Heart right ventricle (tissue), 16 donors: ENCODE measurements at regions of chr21 and their contacts with region 1.

Region 1: DNA sequence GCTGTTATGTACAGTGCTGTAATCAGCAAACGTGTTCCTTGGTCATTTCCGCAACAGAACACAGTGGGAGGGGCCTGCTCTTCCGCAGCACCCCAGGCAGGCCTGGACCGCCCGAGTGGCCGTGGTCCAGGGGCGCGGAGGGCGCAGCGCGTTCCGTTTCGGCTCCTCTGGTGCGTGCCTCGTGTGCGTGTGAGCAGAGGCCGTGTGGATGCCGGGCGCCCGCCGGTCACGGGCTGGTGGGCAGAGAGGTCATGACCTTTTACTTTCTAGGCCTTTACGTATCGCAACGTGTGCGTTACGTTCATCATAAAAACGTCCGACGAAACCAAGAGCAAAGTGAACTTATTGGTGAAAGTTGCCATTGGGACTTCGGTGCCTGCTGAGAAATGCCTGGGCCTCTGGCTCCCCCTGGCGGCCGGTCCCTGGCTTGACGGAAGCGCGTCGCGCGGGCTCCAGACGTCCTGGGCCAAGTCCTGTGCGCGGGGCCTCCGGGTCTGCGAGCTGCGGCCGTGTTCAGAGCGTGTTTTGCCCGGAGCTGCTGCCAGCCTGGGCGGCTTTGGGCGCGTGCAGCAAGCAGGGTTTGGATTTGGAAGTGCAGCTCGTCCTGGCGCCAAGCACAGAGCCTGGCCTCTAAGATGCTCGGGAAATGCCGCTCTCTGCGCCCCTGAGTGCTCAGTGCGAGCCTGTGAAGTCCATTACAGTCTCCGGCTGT is 34.4 kb downstream of the COL18A1 start:
- DNase-seq: peak; percentile 86 to 89
- ATAC-seq: peak; percentile 83 to 90 (median 88)
- H3K4me3 ChIP-seq: peak overlapping the region in 9 of 10 donors; percentile 25 to 55 (median 40)
- H3K27ac ChIP-seq: peak overlapping the region; percentile 54 to 94 (median 81)
- H3K4me1 ChIP-seq: peaks cover 0 to 36% (median 18%) of the 10 kb centered on the region in 9 donors
- H3K27me3 ChIP-seq: no peaks in the 10 kb centered on the region
- CTCF ChIP-seq: peak; percentile 92 to 99 (median 98)

Region 2: GRCh38 chr21:45147473-45148315 is 291.6 kb before region 1 on chr21:
- intact Hi-C with region 1: loop called in 5 of 10 experiments (anchors 5 to 10 kb)
- DNase-seq: no peak
- ATAC-seq: no peak
- H3K4me3 ChIP-seq: no peak overlapping the region
- H3K27ac ChIP-seq: no peak overlapping the region
- H3K4me1 ChIP-seq: peaks cover 0 to 19% (median 2%) of the 10 kb centered on the region in 9 donors
- H3K27me3 ChIP-seq: no peaks in the 10 kb centered on the region
- CTCF ChIP-seq: no peak

Region 3: DNA sequence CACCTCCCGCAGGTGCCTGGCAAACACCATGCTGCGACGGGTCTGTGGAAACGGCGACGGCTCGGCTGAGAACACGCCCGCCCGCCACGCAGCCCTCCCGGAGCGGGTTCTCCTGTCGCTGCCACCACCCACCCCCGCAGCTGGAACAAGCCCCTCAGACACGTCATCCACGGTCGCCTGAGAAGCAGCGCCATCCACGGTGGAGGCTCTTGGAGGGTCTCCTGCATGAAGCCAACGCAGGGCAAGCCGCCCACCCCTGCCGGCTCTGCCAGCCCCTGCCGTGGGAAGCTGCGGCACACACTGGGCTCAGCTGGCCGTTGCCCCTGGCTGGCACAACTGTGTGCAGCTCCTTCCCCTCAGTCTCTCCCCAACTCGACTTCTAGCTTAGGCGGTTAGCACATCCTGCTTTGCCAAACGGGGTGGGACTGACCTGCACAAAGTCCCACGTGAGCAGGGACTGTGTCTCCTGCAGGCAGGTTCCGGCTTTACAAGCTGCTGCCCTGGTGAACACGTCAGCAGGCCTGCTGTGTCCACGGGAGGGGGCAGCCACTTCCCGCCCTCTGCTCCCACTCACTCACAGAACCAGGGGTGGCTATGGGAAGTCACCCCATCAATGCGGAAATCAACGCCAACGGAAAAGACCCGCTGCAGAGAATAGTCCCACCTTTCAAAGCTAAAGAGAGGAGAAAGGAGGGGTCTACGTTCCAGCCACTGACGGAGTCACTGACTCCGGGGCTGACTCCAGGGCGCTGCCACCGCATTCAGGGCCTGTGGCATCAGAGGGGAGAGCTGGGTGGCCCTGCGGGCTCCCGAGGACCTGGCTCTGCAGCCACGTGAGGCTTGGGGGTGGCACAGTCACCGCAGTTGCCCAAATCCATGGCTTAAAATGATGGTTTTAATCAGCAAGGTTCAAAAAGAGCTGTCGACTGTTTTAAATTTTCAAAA is 161.9 kb before region 1 on chr21:
- intact Hi-C with region 1: no loop called
- DNase-seq: no peak
- ATAC-seq: peak in 2 of 8 donors; percentile 15 to 43
- H3K4me3 ChIP-seq: no peak overlapping the region
- H3K27ac ChIP-seq: no peak overlapping the region
- H3K4me1 ChIP-seq: no peaks in the 10 kb centered on the region
- H3K27me3 ChIP-seq: no peaks in the 10 kb centered on the region
- CTCF ChIP-seq: no peak

Region 4: GRCh38 chr21:45287438-45288391 is 151.6 kb before region 1 on chr21 and contains the start of gene POFUT2:
- intact Hi-C with region 1: loop called in 9 of 10 experiments (anchors 1 to 5 kb)
- DNase-seq: peak; percentile 97 to 99
- ATAC-seq: peak; percentile 89 to 93 (median 92)
- H3K4me3 ChIP-seq: peak within 1 kb of the TSS; percentile 41 to 77 (median 68)
- H3K27ac ChIP-seq: peak within 1 kb of the TSS in 9 of 10 donors; percentile 35 to 90 (median 81)
- H3K4me1 ChIP-seq: peaks cover 16 to 40% (median 28%) of the 10 kb centered on the region in 9 donors
- H3K27me3 ChIP-seq: no peaks in the 10 kb centered on the region
- CTCF ChIP-seq: peak in 1 of 9 donors; percentile 3
- total RNA-seq, gene POFUT2: 12.7 to 20.4 (median 16.3) TPM

Region 5: DNA sequence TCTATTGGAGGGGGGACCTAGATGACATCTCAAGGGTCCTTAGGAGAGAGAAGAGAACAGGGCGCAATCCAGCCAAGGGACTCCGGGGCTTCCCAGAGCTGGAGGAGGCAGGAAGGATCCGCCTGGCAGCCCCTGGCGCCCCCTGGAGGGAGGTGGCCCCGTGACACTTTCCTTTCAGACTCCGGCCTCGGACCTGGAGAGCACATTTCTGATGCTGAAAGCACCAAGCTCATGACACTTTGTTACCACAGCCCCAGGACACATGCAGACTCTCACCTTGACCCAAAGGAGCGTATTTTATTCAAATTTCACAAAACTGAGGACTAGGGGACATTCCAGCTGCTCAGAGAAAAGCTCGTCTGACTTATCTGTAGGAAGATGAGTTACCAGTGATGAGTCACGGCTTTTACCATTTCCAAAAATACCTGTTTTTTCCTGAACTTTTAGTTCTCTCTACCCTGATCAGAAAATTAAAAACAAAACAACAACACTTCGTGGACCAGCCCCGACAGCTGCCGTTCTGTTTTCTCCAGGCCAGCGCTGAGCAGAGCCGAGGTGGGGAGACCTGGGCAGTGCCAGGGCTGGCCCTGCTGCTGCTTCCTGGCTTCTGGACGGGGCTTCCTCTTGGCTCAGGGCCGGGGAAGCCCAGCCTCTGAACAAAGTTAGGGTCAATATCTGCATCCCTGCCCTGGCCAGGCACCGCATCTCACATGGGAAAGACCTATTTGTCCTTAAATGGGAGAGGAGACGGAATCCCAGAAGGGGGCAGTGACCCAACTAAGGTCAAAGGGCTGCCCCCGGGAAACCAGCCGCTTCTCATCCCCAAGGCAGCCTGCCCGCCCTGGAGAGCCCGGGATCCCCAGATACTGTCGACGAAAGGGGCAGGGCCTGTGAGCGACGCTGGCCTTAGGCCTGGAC is 130.0 kb before region 1 on chr21:
- intact Hi-C with region 1: loop called in 1 of 10 experiments (anchors 5 kb)
- DNase-seq: peak; percentile 77 to 81
- ATAC-seq: peak; percentile 25 to 69 (median 50)
- H3K4me3 ChIP-seq: no peak overlapping the region
- H3K27ac ChIP-seq: peak overlapping the region; percentile 31 to 89 (median 64)
- H3K4me1 ChIP-seq: peaks cover 14 to 45% (median 35%) of the 10 kb centered on the region in 9 donors
- H3K27me3 ChIP-seq: no peaks in the 10 kb centered on the region
- CTCF ChIP-seq: peak; percentile 54 to 83 (median 74)

Region 6: GRCh38 chr21:45386721-45387371 is 52.5 kb before region 1 on chr21:
- intact Hi-C with region 1: loop called in 7 of 10 experiments (anchors 1 to 5 kb)
- DNase-seq: peak; percentile 51 to 54
- ATAC-seq: peak; percentile 41 to 68 (median 64)
- H3K4me3 ChIP-seq: peak overlapping the region in 1 of 10 donors; percentile 8
- H3K27ac ChIP-seq: peak overlapping the region in 7 of 10 donors; percentile 1 to 66 (median 44)
- H3K4me1 ChIP-seq: peaks cover 9 to 25% (median 17%) of the 10 kb centered on the region in 9 donors
- H3K27me3 ChIP-seq: peaks cover 0 to 9% (median 0%) of the 10 kb centered on the region in 7 donors
- CTCF ChIP-seq: peak in 7 of 9 donors; percentile 30 to 59 (median 49)

Region 7: DNA sequence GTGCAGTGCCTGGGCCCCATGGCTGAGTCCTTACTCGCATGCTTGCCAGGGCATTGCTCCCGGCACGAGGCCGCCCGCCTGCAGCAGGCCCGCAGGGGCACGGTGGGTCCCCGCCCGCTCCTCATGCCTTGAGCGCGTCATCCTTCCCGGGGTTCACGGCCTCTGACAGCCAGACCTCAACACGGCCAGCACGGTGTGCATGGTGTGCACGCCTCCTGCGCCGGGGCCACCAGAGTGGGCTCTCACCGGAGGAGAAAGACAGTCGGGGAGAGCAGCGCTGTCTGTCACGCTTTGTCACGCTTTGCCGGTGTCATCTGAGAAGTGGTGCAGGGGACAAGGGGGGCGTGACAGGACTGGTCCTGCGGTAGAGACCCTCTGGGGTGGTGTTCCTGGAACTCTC is 46.3 kb before region 1 on chr21:
- intact Hi-C with region 1: loop called in 3 of 10 experiments (anchors 5 kb)
- DNase-seq: no peak
- ATAC-seq: no peak
- H3K4me3 ChIP-seq: no peak overlapping the region
- H3K27ac ChIP-seq: no peak overlapping the region
- H3K4me1 ChIP-seq: peaks cover 0 to 7% (median 0%) of the 10 kb centered on the region in 9 donors
- H3K27me3 ChIP-seq: peaks cover 0 to 9% (median 0%) of the 10 kb centered on the region in 7 donors
- CTCF ChIP-seq: no peak

Region 8: DNA sequence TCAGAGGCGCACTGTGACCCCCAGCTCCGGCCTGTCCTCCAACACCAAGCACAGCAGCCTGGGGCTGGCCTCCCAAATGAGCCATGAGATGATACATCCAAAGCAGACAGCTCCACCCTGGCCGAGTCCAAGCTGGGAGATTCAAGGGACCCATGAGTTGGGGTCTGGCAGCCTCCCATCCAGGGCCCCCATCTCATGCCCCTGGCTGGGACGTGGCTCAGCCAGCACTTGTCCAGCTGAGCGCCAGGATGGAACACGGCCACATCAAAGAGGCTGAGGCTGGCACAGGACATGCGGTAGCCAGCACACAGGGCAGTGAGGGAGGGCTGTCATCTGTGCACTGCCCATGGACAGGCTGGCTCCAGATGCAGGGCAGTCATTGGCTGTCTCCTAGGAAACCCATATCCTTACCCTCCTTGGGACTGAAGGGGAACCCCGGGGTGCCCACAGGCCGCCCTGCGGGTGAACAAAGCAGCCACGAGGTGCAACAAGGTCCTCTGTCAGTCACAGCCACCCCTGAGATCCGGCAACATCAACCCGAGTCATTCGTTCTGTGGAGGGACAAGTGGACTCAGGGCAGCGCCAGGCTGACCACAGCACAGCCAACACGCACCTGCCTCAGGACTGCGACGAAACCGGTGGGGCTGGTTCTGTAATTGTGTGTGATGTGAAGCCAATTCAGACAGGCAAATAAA is 73.8 kb after region 1 on chr21:
- intact Hi-C with region 1: no loop called
- DNase-seq: peak in 1 of 2 donors; percentile 10
- ATAC-seq: peak in 2 of 8 donors; percentile 9 to 36
- H3K4me3 ChIP-seq: no peak overlapping the region
- H3K27ac ChIP-seq: no peak overlapping the region
- H3K4me1 ChIP-seq: peaks cover 0 to 10% (median 0%) of the 10 kb centered on the region in 9 donors
- H3K27me3 ChIP-seq: no peaks in the 10 kb centered on the region
- CTCF ChIP-seq: no peak